Activated T-helper 2 cell treated with anti-CD3 and anti-CD28 coated beads, Interferon-gamma antibody, Interleukin-2, Interleukin-4, amounts not matched to agents 10 μg/mL and 5 μg/mL and 100 μg/mL, durations not matched to agents 14 hours and 24 hours and 36 hours (primary cell): ENCODE measurements at regions of chr5 and their contacts with region 1.

Region 1: GRCh38 chr5:148179234-148179824 is 11.0 kb downstream of the SPINK14 start:
- DNase-seq: no peak
- H3K4me3 Mint-ChIP-seq: no peak overlapping the region
- H3K27ac Mint-ChIP-seq: no peak overlapping the region
- H3K4me1 Mint-ChIP-seq: peaks cover 1% of the 10 kb centered on the region
- H3K27me3 Mint-ChIP-seq: no peaks in the 10 kb centered on the region

Region 2: DNA sequence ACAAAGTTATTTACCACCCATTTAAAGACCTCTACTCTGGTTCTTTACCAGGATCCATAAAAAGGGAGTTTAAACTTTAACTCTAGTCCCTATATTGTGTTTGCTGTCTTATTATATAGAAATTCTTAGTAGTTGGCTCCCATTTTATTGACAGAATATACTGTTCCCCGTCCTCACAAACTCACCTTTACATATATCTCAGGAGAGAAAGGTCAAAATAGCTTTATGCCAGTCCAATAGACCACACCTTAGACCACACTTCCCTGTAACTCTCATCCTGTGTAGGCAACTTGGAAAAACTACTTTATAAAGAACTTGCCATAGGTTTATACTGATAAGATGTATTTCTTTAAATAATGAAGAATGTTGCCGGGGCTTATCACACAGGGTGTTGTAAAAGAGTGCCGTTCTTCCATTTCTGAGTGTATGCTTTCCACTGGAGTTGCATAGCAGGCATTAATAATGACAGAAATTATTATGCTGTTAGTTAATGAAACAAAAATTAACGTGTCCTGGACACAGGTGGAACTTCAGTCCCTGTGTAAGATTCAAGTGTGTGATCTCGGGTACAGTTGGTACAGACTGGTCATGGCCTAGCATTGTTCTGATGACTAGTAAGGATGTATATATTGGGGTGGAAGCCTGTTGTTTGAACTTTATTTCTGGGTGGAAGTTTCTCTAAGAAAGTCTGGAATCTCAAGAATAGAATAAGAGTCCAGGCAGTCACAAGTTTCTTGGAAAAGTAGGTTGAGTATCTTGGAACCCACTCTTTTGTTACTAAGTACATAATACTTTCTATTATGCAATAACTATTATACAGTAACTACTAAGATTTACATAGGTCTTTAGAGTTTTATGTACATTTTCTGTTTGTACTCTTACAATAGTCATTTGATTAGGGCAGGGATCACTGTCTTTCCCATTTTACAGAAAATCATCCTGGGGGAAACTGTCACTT is 44.0 kb before region 1 on chr5:
- intact Hi-C with region 1: no loop called
- DNase-seq: no peak
- H3K4me3 Mint-ChIP-seq: no peak overlapping the region
- H3K27ac Mint-ChIP-seq: no peak overlapping the region
- H3K4me1 Mint-ChIP-seq: no peaks in the 10 kb centered on the region
- H3K27me3 Mint-ChIP-seq: no peaks in the 10 kb centered on the region

Region 3: GRCh38 chr5:148374692-148375360 is 195.5 kb after region 1 on chr5:
- intact Hi-C with region 1: loop called (anchors 1 kb)
- DNase-seq: no peak
- H3K4me3 Mint-ChIP-seq: no peak overlapping the region
- H3K27ac Mint-ChIP-seq: no peak overlapping the region
- H3K4me1 Mint-ChIP-seq: peaks cover 11% of the 10 kb centered on the region
- H3K27me3 Mint-ChIP-seq: no peaks in the 10 kb centered on the region

Region 4: DNA sequence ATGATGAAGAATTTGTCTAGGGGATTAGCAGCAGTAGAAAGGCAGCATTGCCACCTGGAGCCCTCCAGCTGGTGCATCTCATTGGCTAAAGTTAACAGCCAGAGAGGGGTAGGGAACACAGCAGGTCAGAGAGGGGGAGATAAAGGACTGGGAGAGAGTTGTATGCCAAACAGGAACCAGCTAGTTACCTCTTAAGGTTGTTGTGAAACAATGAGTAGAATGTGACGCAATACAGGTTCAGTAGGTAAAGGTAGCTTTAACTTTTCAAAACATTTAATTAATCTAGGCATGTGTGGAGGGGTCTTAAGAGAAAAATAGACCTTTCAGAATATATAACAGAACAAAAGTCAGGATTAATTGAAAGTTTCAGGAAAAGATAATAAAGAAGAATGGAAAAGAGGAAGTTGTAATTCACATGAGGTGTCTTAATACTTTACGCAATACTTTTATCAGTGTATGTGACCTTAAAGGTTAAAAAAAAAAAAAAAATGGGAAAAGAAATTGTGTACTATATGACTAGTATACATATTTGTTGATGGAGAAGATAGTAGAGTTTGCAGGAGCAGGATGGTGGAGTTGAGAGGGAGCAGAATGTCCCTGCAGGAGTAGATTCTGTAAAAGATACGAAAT is 218.8 kb after region 1 on chr5:
- intact Hi-C with region 1: no loop called
- DNase-seq: no peak
- H3K4me3 Mint-ChIP-seq: no peak overlapping the region
- H3K27ac Mint-ChIP-seq: no peak overlapping the region
- H3K4me1 Mint-ChIP-seq: peaks cover 36% of the 10 kb centered on the region
- H3K27me3 Mint-ChIP-seq: no peaks in the 10 kb centered on the region

Region 5: GRCh38 chr5:148443998-148444397 is 264.7 kb after region 1 on chr5:
- intact Hi-C with region 1: loop called (anchors 5 kb)
- DNase-seq: peak; percentile 15
- H3K4me3 Mint-ChIP-seq: no peak overlapping the region
- H3K27ac Mint-ChIP-seq: no peak overlapping the region
- H3K4me1 Mint-ChIP-seq: peaks cover 2% of the 10 kb centered on the region
- H3K27me3 Mint-ChIP-seq: no peaks in the 10 kb centered on the region

Region 6: GRCh38 chr5:148482691-148483462 is 303.5 kb after region 1 on chr5:
- intact Hi-C with region 1: loop called (anchors 2 kb)
- DNase-seq: peak; percentile 41
- H3K4me3 Mint-ChIP-seq: no peak overlapping the region
- H3K27ac Mint-ChIP-seq: no peak overlapping the region
- H3K4me1 Mint-ChIP-seq: peaks cover 5% of the 10 kb centered on the region
- H3K27me3 Mint-ChIP-seq: peaks cover 37% of the 10 kb centered on the region